ENCODE measurements at regions of chr3 and their contacts with region 1.

Region 1: GRCh38 chr3:54863131-54863765 is 64.6 kb downstream of the LRTM1 start:
- DNase-seq: no peak
- H3K4me3 ChIP-seq: no peak overlapping the region
- H3K27ac ChIP-seq: no peak overlapping the region
- H3K4me1 ChIP-seq: no peaks in the 10 kb centered on the region
- H3K27me3 ChIP-seq: no peaks in the 10 kb centered on the region
- CTCF ChIP-seq: no peak
- POLR2A ChIP-seq: no peak

Region 2: GRCh38 chr3:56251343-56251945 is 1388.2 kb after region 1 on chr3:
- intact Hi-C with region 1: loop called (anchors 10 kb)
- DNase-seq: peak; percentile 49
- H3K4me3 ChIP-seq: no peak overlapping the region
- H3K27ac ChIP-seq: no peak overlapping the region
- H3K4me1 ChIP-seq: no peaks in the 10 kb centered on the region
- H3K27me3 ChIP-seq: no peaks in the 10 kb centered on the region
- CTCF ChIP-seq: peak; percentile 30 to 81 (median 76)
- POLR2A ChIP-seq: no peak